Transverse colon (tissue), 4 donors: ENCODE measurements at regions of chr5 and their contacts with region 1.

Region 1: GRCh38 chr5:171893290-171893886 is 107.8 kb downstream of the SMIM23 start:
- DNase-seq: no peak
- H3K4me3 ChIP-seq: no peak overlapping the region
- H3K27ac ChIP-seq: no peak overlapping the region
- H3K4me1 ChIP-seq: no peaks in the 10 kb centered on the region
- H3K27me3 ChIP-seq: no peaks in the 10 kb centered on the region
- CTCF ChIP-seq: no peak
- EP300 ChIP-seq: no peak
- POLR2A ChIP-seq: no peak

Region 2: DNA sequence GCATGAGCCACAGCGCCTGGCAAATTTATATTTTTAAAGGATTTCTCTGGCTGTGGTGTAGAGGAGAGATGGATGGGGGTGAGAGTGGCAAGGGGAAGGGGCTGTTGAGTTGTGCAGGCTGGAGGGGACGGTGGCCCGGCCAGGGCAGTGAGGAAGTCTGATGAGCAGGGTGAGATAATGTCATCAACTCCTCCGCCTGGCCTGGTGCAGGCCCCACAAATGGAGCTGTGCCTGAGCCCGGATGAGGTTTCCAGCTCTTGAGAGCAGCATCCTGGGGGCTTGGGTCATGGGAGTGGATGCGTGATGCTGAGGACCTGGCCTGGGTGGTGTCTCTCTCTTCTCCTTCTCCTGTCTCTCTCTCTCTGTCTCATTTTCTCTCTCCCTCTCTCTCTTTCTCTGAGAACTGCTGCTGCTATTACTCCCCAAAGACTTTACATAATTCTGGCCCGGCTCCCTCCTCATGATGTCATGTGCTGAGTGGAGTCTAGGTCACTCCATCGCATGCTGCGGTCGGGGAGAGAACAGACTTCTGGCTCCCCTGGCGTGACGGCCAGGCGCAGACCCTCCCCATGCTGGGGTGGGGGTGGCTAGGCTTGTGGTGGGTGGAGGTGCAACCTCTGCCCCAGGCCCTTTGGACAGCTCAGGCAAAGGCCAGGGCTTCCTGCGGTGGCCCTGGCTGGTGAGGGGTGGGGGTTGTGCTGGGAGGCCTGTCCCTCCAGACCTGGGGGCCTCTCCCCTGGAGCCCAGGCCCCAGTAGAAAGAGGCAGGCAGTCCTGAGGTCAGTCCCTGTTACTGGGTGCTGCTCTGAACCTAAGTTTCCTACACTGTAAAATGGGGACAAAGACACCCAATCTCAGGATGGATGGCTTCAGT is 447.5 kb before region 1 on chr5:
- in situ Hi-C with region 1: loop called in 1 of 4 experiments (anchors 25 kb)
- intact Hi-C with region 1: no loop called
- DNase-seq: no peak
- H3K4me3 ChIP-seq: no peak overlapping the region
- H3K27ac ChIP-seq: no peak overlapping the region
- H3K4me1 ChIP-seq: peaks cover 0 to 3% (median 2%) of the 10 kb centered on the region in 4 donors
- H3K27me3 ChIP-seq: peaks cover 7% of the 10 kb centered on the region
- CTCF ChIP-seq: no peak
- EP300 ChIP-seq: no peak
- POLR2A ChIP-seq: no peak

Region 3: GRCh38 chr5:171785517-171785916 is 107.9 kb before region 1 on chr5 and contains the start of gene SMIM23:
- in situ Hi-C with region 1: no loop called
- intact Hi-C with region 1: no loop called
- DNase-seq: no peak
- H3K4me3 ChIP-seq: no peak within 1 kb of the TSS
- H3K27ac ChIP-seq: no peak within 1 kb of the TSS
- H3K4me1 ChIP-seq: no peaks in the 10 kb centered on the region
- H3K27me3 ChIP-seq: peaks cover 5% of the 10 kb centered on the region
- CTCF ChIP-seq: no peak
- EP300 ChIP-seq: no peak
- POLR2A ChIP-seq: no peak
- total RNA-seq, gene SMIM23: not detected

Region 4: DNA sequence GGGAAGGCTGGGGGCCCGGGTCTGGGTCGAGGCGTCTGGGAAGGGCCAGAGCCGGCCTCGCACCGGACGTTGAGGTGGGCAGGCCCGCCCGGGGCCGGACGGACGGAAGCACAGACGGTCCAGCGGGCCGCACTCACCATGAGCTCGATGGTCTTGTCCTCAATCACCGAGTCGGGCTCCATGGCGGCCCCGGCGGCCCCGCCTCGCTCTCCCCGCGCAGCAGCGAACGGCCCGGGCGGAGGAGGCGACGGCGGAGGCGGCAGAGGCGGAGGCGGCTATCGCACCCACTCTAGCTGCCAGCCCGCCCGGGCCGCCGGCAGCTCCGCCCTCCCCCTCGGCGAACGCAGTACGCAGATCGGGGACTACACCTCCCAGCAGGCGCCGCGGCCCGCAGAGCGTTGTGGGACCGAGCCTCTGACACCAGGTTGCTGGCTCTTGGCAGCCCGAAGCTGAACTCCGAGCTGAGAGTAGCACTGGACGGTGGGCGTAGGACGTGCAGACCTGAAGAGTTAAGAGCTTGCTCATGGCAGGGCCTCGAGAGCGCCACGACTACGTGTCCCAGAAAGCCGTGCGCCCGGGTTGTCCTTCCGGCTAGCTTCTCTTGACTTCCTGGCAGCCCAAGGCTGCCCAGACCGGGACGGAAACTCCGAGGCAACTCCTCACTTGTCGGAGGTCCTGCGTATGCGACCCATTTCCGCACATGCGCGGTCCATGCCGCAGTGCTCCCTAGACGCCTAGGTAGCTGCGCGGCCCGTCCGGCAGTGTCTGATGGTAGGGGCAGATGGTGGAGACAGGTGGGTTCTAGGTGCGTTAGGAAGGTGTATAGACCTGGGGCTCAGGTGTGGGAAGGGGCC is 113.2 kb after region 1 on chr5 and contains the start of gene FBXW11:
- in situ Hi-C with region 1: no loop called
- intact Hi-C with region 1: no loop called
- DNase-seq: peak; percentile 97
- H3K4me3 ChIP-seq: peak within 1 kb of the TSS; percentile 74 to 95 (median 87)
- H3K27ac ChIP-seq: peak within 1 kb of the TSS; percentile 95 to 96 (median 96)
- H3K4me1 ChIP-seq: peaks cover 17 to 46% (median 42%) of the 10 kb centered on the region in 4 donors
- H3K27me3 ChIP-seq: no peaks in the 10 kb centered on the region
- CTCF ChIP-seq: no peak
- EP300 ChIP-seq: no peak
- POLR2A ChIP-seq: peak; percentile 88
- total RNA-seq, gene FBXW11: 22.8 to 44.8 (median 40.3) TPM